ENCODE measurements at regions of chr9 and their contacts with region 1.

Region 1: DNA sequence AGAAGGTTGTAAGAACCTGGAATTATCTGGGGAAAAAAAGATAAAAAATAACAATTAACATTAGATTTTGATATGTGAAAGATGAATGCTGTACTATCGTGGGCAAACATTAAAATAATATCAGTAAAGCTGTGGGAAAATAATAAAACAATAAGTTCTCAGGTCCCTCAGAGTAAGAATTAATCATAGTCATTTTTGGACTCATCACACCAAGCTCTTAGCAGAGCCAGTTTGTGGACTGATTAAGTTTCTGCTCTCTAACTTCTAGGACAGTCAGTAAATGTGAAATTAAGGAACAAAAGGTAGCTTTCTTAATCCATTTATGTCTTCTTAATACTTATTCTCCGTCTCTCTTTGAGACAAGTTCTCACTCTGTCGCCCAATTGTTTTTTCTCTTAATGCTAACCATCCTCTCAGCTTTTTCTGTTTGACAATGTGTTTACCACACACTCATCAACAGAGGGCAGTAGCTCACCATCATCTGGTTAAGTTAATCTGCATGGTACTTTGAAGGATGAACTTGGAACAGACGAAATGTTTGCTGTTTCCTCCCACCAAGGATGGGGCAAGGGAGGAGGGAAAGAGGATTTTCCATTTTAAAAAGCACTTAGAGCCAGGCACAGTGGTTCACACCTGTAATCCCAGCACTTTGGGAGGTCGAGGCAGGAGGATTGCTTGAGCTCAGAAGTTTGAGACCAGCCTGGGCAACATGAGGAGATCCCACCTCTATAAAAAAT is 5.3 kb upstream of the ACO1 start:
- DNase-seq: no peak
- ATAC-seq: peak; percentile 92
- H3K4me3 ChIP-seq: no peak overlapping the region
- H3K27ac ChIP-seq: no peak overlapping the region
- H3K4me1 ChIP-seq: no peaks in the 10 kb centered on the region
- H3K27me3 ChIP-seq: no peaks in the 10 kb centered on the region

Region 2: DNA sequence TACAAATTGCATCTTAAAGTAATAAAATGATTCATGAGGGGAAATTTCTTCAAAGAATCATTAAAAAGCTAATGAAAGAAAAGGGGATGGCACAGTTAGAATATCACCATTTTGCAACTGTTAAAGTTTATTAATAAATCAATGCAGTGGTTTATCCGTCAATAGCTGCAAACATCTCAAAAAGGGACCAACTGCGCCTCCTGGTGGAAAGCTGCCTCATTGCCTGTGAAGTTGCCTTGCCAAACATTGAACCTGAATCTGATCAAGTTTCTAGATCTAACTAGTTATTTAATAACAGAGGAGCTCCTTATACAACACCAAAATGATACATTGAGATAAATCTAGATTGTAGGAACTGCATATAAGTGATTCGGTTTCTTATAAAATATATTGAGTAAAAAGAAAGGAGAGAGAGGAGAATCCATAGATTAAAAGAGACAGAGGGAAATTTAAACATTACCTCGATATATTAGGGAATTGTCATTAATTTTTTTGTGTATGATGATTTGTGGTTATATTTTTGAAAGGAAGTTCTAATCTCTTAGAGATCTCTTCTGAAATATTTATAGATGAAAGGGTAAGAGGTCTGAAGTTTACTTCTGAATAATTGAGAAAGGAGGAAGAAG is 200.7 kb after region 1 on chr9:
- intact Hi-C with region 1: loop called (anchors 2 kb)
- DNase-seq: peak; percentile 70 to 91
- ATAC-seq: no peak
- H3K4me3 ChIP-seq: no peak overlapping the region
- H3K27ac ChIP-seq: no peak overlapping the region
- H3K4me1 ChIP-seq: no peaks in the 10 kb centered on the region
- H3K27me3 ChIP-seq: no peaks in the 10 kb centered on the region